SK-N-SH (cell line): ENCODE measurements at regions of chr15 and their contacts with region 1.

Region 1: GRCh38 chr15:52193791-52194190 is 2.6 kb upstream of the GNB5 start:
- DNase-seq: no peak
- H3K4me3 ChIP-seq: no peak overlapping the region
- H3K27ac ChIP-seq: peak overlapping the region in 1 of 2 experiments; percentile 38; a peak in 1 of 4 replicates
- H3K4me1 ChIP-seq: peaks cover 0 to 10% of the 10 kb centered on the region in 2 experiments; a peak in 1 of 4 replicates
- H3K27me3 ChIP-seq: no peaks in the 10 kb centered on the region
- CTCF ChIP-seq: no peak
- EP300 ChIP-seq: no peak
- RAD21 ChIP-seq: no peak

Region 2: DNA sequence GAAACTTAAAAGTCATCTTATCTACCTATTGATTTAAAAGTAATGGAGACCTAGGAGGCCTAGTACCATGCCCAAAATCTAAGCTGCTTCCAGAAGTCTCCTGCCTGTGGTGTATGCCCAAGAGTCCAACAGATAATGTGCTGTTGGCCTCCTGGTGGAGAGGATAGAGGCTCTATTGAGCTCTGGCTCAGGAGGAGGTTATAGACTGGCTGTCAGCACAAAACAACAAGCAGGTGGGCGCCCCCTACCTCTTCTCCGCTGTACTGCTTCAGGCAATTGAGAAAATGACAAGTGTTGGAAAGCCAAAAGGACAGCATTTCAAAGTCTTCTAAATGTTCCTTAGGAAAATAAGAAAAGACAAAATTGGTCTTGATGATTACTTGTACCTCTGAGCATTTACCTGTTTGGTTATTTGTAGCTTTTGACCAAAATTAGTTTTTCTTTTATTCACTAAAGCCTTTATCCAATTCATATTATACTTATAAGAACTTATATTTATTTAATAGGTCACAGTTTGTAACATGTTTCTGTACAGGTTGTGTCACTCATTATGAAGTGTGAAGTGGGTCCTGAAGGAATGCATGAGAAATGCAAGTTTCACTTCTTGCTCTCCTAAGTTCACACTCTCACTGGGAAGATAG is 14.6 kb after region 1 on chr15:
- CTCF ChIA-PET with region 1: interaction called, 14 read pairs
- POLR2A ChIA-PET with region 1: no interaction called
- DNase-seq: peak; percentile 63
- H3K4me3 ChIP-seq: peak overlapping the region in 1 of 2 experiments; percentile 40; a peak in 1 of 4 replicates
- H3K27ac ChIP-seq: no peak overlapping the region
- H3K4me1 ChIP-seq: peaks cover 0 to 6% of the 10 kb centered on the region in 2 experiments; a peak in 2 of 4 replicates
- H3K27me3 ChIP-seq: no peaks in the 10 kb centered on the region
- CTCF ChIP-seq: peak; percentile 86
- EP300 ChIP-seq: 0 out of 4 replicates have a peak, but pooled peaks of 1 of the 2 experiments have one; percentile 7
- RAD21 ChIP-seq: peak; percentile 72

Region 3: DNA sequence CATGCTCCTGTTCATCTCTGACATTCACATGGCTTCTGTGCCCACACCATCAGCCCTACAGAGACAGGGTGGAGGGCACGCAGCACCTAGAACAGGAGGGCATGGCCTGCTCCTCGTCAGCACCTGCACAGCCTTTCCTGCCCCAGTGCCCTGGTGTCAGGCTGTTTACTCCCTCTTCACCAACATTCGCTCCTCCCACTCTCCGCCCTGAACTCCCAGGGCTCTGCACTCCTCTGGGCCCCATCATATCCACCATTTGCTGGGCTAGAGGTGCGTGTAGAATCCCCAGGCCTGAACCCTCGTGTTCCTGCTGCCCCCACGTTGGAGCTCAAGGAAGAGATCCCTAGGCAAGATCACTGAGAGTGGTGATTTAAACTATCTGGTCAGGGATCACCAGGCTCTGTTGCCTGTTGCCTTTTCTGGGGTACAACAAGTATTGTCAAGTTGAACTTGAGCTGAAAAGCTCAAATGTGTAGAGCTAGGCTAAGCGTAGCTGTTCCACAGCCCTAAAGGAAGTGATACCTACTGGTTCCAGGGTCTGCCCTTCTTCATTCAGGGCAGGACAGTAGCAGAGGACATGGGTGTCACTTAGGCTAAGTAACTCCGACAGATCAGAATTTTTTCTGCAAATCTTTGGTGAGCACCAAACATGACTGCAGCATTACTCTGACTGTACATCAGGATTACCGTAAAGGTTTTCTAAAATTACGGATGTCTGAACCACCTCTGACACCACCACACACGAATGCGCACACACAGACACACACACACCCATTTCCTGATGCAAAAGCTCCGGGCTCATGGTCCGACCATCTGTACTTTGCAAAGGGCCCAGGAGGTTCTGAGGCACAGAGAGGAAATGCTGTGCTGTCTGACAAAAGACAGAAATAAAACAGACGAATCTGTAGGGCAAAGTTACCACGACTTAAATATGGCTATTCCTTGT is 41.1 kb after region 1 on chr15:
- CTCF ChIA-PET with region 1: no interaction called
- POLR2A ChIA-PET with region 1: no interaction called
- DNase-seq: no peak
- H3K4me3 ChIP-seq: no peak overlapping the region
- H3K27ac ChIP-seq: no peak overlapping the region
- H3K4me1 ChIP-seq: peaks cover 0 to 2% of the 10 kb centered on the region in 2 experiments; a peak in 1 of 4 replicates
- H3K27me3 ChIP-seq: no peaks in the 10 kb centered on the region
- CTCF ChIP-seq: no peak
- EP300 ChIP-seq: no peak
- RAD21 ChIP-seq: no peak